Activated B cell treated with CpG ODN at 0.5 μM for 24 hours (primary cell): ENCODE measurements at regions of chr14 and their contacts with region 1.

Region 1: DNA sequence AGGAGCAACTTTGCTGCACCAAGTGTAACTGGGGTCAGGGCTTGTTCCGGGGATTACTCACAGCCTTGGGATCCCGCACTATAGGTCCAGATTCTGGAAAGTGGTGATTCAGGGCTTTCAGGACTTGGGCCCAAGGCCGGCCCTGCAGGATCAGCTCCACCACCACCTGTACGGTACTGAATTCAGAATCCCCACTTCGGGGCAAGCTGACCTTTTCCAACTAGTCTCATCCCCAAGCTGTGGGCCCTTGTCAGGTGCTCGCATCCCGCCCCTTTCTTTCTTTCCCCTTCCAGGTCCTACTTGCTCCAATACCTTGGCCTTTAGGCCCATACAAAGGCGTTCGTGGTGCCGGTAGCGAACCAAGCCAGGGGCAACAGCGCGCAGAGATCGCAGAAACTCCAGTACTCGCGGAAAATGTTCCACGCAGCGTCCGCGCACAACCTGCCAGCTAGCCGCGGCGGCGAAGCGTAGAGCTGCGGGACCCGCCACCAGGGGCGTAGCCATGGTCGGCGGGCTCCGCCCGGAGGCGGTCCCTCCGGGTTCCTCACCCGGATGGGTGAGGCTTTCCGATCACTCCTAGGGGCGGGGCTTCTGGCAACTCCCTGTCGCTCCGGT is 487 bp downstream of the TINF2 start:
- DNase-seq: peak; percentile 91
- ATAC-seq: peak; percentile 81
- H3K4me3 Mint-ChIP-seq: peak overlapping the region; percentile 99
- H3K27ac Mint-ChIP-seq: peak overlapping the region; percentile 100
- H3K4me1 Mint-ChIP-seq: peaks cover 68% of the 10 kb centered on the region
- H3K27me3 Mint-ChIP-seq: no peaks in the 10 kb centered on the region
- CTCF ChIP-seq: no peak

Region 2: DNA sequence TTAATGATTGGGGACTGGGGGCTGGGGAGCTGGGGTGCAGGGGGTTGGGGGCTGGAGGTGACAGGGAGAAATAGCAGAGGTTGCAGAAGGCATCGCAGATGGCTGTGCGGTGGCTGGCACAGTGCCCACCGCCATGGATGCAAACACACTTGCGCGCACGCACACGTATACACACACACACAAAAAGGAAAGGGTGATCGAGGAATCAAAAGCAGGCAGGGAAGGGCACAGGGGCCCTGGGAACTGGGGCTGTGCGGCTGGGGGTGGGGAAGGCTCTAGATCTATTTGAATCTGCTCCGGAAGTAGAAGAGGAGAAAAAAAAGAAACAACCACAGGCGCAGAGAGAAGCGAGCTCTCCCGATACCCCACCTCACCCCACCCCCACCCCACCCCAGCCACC is 729.8 kb before region 1 on chr14:
- CTCF ChIA-PET with region 1: no interaction called
- POLR2A ChIA-PET with region 1: no interaction called
- intact Hi-C with region 1: no loop called
- DNase-seq: no peak
- ATAC-seq: no peak
- H3K4me3 Mint-ChIP-seq: peak overlapping the region; percentile 50
- H3K27ac Mint-ChIP-seq: no peak overlapping the region
- H3K4me1 Mint-ChIP-seq: peaks cover 2% of the 10 kb centered on the region
- H3K27me3 Mint-ChIP-seq: no peaks in the 10 kb centered on the region
- CTCF ChIP-seq: no peak

Region 3: DNA sequence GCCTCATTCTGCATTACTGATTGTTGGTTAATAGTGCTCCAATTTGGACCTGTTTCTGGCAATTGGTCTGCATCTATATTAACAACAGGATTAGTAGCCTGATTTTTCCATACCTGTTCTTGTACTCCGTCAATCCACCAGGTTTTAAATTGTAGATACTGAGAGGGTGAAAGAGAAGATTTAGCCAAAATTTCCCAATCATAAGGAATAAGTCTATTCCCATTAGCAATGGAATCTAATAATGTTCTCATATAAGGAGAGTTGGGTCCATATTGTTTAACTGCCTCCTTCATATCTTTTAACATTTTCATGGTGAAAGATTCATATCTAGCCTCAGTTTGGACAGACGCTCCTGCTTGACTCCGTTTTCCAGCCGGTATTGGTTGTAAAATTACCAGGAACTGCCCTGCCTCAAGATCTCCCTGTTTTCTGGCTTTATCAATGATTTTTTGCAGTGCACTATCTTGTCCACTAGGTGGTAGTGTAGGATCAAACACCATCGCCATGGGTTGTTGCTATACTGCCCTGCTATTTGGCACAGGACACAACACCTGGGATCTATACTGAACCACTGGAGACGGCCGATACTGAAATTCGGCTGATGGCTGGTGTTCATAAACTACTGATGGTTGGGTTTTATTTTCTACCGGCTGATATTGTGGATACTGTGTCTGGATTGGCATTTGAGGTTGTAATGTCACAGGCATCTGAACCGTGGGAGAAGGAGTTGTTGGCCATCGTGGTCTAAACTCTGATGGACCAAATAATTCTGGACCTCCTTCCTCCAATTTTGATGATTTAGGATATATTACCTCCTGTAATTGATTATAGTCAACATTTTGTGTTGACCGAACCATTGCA is 228.1 kb before region 1 on chr14:
- CTCF ChIA-PET with region 1: no interaction called
- POLR2A ChIA-PET with region 1: interaction called, 3 read pairs
- intact Hi-C with region 1: loop called (anchors 1 kb)
- DNase-seq: no peak
- ATAC-seq: peak; percentile 97
- H3K4me3 Mint-ChIP-seq: no peak overlapping the region
- H3K27ac Mint-ChIP-seq: no peak overlapping the region
- H3K4me1 Mint-ChIP-seq: peaks cover 20% of the 10 kb centered on the region
- H3K27me3 Mint-ChIP-seq: no peaks in the 10 kb centered on the region
- CTCF ChIP-seq: peak; percentile 48

Region 4: DNA sequence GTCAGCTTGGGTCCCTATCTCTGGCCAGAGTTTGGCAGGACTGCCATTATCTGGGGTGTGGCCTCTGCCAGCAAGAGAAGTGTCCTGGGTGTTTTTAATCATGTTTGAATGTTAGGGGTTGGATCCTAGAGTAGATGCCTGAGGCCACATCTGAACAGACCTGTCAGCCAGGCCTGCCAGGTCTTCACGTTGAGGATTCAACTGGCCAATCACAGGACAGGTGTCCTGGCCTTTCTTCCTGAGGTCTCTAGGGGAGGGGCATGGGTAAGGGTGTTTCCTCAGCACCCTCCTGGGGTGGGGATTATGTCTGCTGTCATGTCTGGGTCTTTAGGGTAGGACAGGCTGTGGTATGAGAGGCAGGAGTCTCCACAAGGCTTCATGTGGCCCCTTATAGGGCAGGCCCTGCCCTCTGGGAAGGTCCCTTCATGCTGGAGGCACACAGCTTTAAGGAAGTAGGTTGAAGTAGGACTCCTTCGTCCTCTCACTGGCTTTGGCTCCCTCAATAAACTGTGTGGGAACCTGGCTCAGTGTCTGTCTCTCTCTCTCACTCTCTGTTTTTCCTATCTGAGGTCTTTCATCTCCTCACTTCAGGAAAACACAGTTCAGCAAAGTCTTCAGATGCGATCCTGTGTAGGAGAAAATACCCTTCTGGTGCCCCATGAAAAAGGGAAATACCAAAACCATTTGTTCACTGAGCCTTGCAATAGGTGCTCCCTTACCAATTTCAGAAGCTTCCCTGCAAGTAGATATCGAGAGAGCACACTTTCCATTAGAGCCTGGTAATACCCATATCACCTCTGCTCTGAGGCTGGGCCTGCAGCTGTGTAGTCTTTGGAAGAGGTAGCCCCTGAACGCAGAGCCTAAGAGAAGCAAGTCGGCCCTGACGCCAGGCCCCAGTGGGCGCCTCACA is 118.2 kb before region 1 on chr14:
- CTCF ChIA-PET with region 1: no interaction called
- POLR2A ChIA-PET with region 1: interaction called, 10 read pairs
- intact Hi-C with region 1: no loop called
- DNase-seq: no peak
- ATAC-seq: peak; percentile 83
- H3K4me3 Mint-ChIP-seq: peak overlapping the region; percentile 52
- H3K27ac Mint-ChIP-seq: peak overlapping the region; percentile 93
- H3K4me1 Mint-ChIP-seq: peaks cover 38% of the 10 kb centered on the region
- H3K27me3 Mint-ChIP-seq: no peaks in the 10 kb centered on the region
- CTCF ChIP-seq: no peak

Region 5: DNA sequence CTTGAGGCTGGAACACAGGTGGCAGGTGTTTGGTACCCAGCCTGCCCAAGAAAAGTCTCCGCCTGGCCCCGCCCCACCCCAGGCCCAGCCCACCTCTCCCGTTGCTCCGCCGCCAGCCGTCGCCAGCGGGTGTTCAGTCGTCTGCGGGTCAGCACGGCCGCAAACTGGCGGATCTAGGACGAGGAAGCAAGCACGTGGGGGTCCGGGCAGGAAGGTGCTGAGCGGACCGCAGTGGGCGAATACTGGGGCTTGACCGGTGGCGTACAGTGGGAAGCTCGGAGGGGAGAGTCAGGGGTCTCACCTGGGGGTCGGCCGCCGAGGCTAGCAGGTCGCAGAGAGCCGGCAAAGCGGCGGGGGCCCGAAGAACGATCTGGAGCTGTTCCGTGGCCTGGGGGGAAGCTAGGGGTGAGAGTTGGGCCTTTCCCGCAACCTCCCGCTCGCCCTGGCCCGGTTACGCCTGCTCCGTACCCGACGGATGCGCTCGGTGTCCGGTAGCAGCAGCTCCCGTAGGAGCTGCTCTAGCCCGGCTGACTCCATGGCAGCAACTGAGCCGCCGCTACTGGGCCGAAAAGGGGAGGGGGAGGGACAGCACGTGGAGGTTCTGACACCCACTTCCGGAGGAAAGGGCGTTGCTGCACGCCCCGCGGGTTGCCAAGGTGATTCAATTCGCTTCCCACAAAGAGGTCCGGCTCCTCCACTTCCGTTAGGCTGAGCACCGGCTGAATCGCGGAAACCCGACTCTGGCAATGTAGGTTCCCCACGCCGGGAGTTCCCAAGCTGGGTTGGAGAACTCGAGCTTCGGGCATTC is 53.5 kb before region 1 on chr14 and contains the start of gene IPO4:
- CTCF ChIA-PET with region 1: no interaction called
- POLR2A ChIA-PET with region 1: interaction called, 38 read pairs
- intact Hi-C with region 1: no loop called
- DNase-seq: peak; percentile 81
- ATAC-seq: peak; percentile 92
- H3K4me3 Mint-ChIP-seq: peak within 1 kb of the TSS; percentile 91
- H3K27ac Mint-ChIP-seq: peak within 1 kb of the TSS; percentile 87
- H3K4me1 Mint-ChIP-seq: peaks cover 32% of the 10 kb centered on the region
- H3K27me3 Mint-ChIP-seq: no peaks in the 10 kb centered on the region
- CTCF ChIP-seq: no peak
- total RNA-seq, gene IPO4: 76.4 and 80.3 TPM in 2 replicates

Region 6: GRCh38 chr14:24279301-24280186 is 37.6 kb after region 1 on chr14:
- CTCF ChIA-PET with region 1: interaction called, 21 read pairs
- POLR2A ChIA-PET with region 1: interaction called, 175 read pairs
- intact Hi-C with region 1: loop called (anchors 2 kb)
- DNase-seq: peak; percentile 54
- ATAC-seq: peak; percentile 89
- H3K4me3 Mint-ChIP-seq: peak overlapping the region; percentile 63
- H3K27ac Mint-ChIP-seq: peak overlapping the region; percentile 90
- H3K4me1 Mint-ChIP-seq: peaks cover 73% of the 10 kb centered on the region
- H3K27me3 Mint-ChIP-seq: no peaks in the 10 kb centered on the region
- CTCF ChIP-seq: no peak

Region 7: DNA sequence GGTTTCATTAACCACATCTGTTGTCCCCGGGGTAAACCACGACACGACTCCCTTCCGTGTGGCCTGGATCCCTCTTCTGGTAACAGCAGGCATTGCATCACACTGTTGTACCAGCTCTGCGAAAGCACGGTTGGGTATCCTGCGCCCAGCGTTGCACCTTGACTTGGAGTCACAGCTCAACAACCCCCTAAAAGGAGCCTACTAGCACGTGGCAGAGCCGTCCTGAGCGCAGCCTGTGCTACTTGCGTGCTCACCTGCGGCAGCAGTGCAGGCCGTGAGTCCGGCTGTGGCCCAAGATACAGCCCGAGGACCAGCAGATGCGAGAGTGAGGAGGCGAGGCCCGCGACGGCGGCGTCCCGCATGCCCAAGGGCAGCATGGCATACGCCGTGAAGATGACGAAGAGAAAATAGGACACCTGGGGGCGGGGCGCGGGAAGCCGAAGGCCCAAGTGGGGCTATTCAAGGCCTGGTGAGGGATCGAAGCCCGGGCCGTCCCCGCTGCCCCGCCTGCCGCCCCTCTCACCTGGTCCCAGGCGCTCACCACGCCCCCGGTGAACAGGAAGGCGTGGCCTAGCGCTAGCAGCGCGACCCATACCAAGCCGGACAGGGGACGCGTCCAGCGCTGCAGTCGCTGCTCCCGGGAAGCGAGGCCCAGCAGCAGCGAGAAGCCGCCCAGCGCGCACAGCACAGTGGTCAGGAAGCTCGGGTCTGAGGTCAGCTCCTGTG is 90.5 kb after region 1 on chr14:
- CTCF ChIA-PET with region 1: interaction called, 5 read pairs
- POLR2A ChIA-PET with region 1: interaction called, 8 read pairs
- intact Hi-C with region 1: loop called (anchors 1 kb)
- DNase-seq: peak; percentile 63
- ATAC-seq: peak; percentile 95
- H3K4me3 Mint-ChIP-seq: peak overlapping the region; percentile 83
- H3K27ac Mint-ChIP-seq: peak overlapping the region; percentile 42
- H3K4me1 Mint-ChIP-seq: peaks cover 39% of the 10 kb centered on the region
- H3K27me3 Mint-ChIP-seq: peaks cover 14% of the 10 kb centered on the region
- CTCF ChIP-seq: no peak